Activated naive CD4-positive, alpha-beta T cell treated with anti-CD3 and anti-CD28 coated beads for 36 hours (primary cell): ENCODE measurements at regions of chr6 and their contacts with region 1.

Region 1: GRCh38 chr6:81752138-81752920 is at the start of gene TENT5A:
- DNase-seq: peak; percentile 89
- H3K4me3 Mint-ChIP-seq: peak within 1 kb of the TSS; percentile 88
- H3K27ac Mint-ChIP-seq: peak within 1 kb of the TSS; percentile 77
- H3K4me1 Mint-ChIP-seq: peaks cover 28% of the 10 kb centered on the region
- H3K27me3 Mint-ChIP-seq: peaks cover 12% of the 10 kb centered on the region
- total RNA-seq, gene TENT5A: 0.72 to 1.0 TPM

Region 2: DNA sequence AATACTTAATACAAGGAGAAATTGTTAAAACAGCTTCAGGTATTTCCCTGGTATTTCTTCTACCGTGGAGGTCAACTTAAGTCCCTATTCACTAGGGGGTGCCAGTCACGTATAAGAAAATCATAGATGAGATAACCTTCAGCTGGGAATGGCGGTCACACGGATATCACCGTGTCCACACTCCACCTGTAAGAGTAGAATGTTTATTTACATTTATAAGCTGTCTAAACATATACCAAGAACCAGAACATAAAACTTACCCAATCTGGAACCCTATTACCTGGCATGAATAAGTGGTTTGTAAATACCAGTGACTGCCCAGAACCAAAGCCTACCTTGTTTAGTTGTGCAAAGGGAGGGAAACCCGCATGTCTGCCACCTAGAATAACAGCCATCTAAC is 1803.1 kb before region 1 on chr6:
- CTCF ChIA-PET with region 1: no interaction called
- intact Hi-C with region 1: loop called (anchors 1 kb)
- DNase-seq: peak; percentile 83
- H3K4me3 Mint-ChIP-seq: no peak overlapping the region
- H3K27ac Mint-ChIP-seq: no peak overlapping the region
- H3K4me1 Mint-ChIP-seq: peaks cover 14% of the 10 kb centered on the region
- H3K27me3 Mint-ChIP-seq: peaks cover 34% of the 10 kb centered on the region

Region 3: GRCh38 chr6:80133020-80133419 is 1619.3 kb before region 1 on chr6:
- CTCF ChIA-PET with region 1: no interaction called
- intact Hi-C with region 1: loop called (anchors 1 kb)
- DNase-seq: peak; percentile 42
- H3K4me3 Mint-ChIP-seq: no peak overlapping the region
- H3K27ac Mint-ChIP-seq: no peak overlapping the region
- H3K4me1 Mint-ChIP-seq: no peaks in the 10 kb centered on the region
- H3K27me3 Mint-ChIP-seq: no peaks in the 10 kb centered on the region

Region 4: DNA sequence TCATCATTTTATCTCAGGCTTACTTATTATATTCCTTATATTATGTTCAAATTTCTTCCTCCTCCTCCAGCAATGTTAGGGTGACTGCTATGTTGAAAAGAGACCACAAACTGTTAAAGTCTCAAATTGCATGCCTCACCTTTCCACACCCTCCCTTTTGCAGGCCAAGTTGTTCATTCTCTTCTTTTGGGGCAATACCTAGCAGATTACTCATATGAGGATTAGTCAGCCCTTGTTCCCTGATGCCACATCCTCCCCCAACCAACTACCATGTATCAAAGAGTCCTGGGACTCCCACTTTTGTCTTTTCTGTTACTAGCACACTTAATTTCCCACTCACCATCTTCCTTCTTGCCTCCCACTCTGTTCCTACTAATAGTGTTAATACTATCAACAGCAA is 1211.1 kb before region 1 on chr6:
- CTCF ChIA-PET with region 1: no interaction called
- intact Hi-C with region 1: loop called (anchors 10 kb)
- DNase-seq: peak; percentile 14
- H3K4me3 Mint-ChIP-seq: no peak overlapping the region
- H3K27ac Mint-ChIP-seq: no peak overlapping the region
- H3K4me1 Mint-ChIP-seq: no peaks in the 10 kb centered on the region
- H3K27me3 Mint-ChIP-seq: peaks cover 15% of the 10 kb centered on the region

Region 5: DNA sequence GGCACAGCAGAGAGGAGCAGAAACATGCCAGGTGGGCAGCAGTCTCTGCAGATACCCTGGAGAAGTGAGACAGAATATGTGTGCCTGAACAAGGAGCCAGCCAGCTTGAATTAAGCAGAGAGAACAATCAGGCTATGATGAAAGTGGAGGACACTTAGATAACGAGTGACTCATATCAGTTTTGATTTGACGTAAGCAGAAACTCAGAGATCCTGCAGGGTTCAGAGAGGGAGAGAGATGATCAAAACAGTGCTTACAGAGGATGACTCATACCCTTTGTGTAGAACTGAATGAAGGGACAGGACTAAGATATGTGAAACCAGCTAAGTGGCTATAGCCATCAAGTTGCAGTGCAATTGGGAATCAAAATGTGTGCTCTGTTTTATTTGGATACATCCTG is 300.5 kb before region 1 on chr6:
- CTCF ChIA-PET with region 1: no interaction called
- intact Hi-C with region 1: loop called (anchors 2 kb)
- DNase-seq: no peak
- H3K4me3 Mint-ChIP-seq: no peak overlapping the region
- H3K27ac Mint-ChIP-seq: no peak overlapping the region
- H3K4me1 Mint-ChIP-seq: no peaks in the 10 kb centered on the region
- H3K27me3 Mint-ChIP-seq: no peaks in the 10 kb centered on the region

Region 6: GRCh38 chr6:81797591-81797990 is 45.3 kb after region 1 on chr6:
- CTCF ChIA-PET with region 1: no interaction called
- intact Hi-C with region 1: no loop called
- DNase-seq: no peak
- H3K4me3 Mint-ChIP-seq: no peak overlapping the region
- H3K27ac Mint-ChIP-seq: no peak overlapping the region
- H3K4me1 Mint-ChIP-seq: no peaks in the 10 kb centered on the region
- H3K27me3 Mint-ChIP-seq: peaks cover 10% of the 10 kb centered on the region

Region 7: GRCh38 chr6:82331031-82331773 is 578.9 kb after region 1 on chr6:
- CTCF ChIA-PET with region 1: no interaction called
- intact Hi-C with region 1: no loop called
- DNase-seq: no peak
- H3K4me3 Mint-ChIP-seq: no peak overlapping the region
- H3K27ac Mint-ChIP-seq: no peak overlapping the region
- H3K4me1 Mint-ChIP-seq: no peaks in the 10 kb centered on the region
- H3K27me3 Mint-ChIP-seq: peaks cover 11% of the 10 kb centered on the region

Region 8: DNA sequence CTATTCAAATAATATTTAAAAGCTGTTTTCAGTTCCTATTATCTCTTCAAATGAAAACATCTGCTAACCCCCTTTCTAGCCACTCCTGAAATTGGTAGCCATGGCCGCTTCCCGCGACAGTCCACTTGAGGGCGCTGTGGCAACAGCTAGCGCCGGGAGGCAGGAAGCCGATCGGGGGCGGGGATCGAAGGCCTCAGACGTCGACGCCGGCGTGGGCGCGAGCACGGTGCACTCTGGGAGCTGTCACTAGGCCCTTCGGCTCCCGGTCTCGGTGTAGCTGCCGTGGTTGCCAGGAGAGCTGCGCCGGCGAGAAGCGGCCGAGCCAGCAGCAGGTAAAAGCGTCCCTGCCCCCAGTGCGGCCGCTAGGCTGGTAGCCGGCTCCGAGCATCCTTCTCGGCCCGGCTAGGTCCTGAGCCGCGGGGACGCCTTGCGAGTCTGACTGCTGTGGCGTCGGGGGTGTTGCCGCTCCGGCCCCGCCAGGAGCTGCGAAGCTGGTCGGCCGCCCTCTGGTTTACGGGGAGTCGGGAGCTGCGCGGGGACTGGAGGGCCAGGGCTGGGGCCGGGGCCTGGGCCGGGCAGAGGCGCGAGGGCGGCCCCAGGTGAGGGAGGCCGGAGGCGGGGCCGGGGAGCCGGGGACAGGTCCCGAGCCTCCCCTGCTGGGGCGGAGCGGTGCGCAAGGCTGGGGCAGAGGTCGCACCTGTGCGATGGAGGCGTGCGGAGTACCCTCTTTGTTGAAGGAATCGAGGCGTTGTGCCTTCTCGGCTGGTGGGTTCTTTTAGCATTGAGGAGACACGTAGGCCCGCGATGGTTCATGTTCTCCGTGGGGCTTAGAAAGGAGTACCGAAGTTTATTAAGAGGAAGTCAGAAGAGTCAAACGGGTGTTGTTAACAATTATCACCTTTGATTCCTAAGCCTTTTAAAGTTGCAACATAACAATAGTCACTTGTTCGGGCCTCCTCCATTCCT is 1315.4 kb after region 1 on chr6 and contains the start of gene DOP1A:
- CTCF ChIA-PET with region 1: no interaction called
- intact Hi-C with region 1: loop called (anchors 2 kb)
- DNase-seq: peak; percentile 98
- H3K4me3 Mint-ChIP-seq: peak within 1 kb of the TSS; percentile 87
- H3K27ac Mint-ChIP-seq: peak within 1 kb of the TSS; percentile 76
- H3K4me1 Mint-ChIP-seq: peaks cover 40% of the 10 kb centered on the region
- H3K27me3 Mint-ChIP-seq: no peaks in the 10 kb centered on the region
- total RNA-seq, gene DOP1A: 5.0 to 6.5 TPM